WTC11 (cell line): ENCODE measurements at regions of chr14 and their contacts with region 1.

Region 1: DNA sequence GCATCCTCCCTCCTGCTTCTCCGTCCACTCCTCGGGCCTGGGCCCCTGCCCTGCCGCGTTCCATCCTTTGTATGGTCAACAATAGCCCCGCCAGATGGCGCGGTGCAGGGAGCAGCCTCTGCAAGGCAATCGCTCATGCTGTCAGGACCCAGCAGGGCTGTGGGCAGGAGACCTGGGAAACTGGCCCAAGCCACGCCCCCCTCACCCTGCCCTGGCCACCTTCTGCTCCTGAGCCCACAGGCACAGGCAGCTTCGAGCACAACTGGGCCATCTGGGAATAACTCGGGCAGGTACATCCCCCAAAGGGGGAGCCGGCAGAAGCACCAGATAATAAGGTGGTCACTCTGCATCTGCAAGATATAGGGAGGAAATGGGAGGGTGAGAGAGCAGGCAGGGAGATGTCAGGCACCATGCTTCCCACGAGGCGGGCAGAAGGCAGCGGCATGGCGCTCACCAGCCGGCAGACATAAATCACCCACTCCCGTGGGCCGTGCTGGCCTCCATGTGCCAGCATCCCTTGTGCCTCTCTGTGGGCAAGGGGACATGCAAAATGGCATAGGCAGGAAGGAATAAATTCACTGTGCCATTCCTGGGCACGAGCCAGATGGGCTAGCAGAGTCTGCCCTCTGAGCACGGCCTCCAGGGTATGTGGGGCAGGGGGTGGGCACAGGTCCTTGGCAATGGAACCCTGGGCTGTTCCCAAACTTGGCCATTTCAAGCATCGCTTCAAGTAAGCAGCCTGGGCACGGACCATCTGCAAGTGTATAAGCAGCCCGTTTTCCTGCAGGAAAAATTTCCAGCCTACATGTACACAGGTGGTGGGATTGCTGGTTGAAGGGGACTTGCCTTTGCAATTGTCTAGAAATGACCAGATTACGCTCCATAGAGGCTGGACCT is 40.5 kb downstream of the CCDC85C start:
- DNase-seq: peak; percentile 92
- ATAC-seq: peak; percentile 94
- H3K4me3 Mint-ChIP-seq: no peak overlapping the region
- H3K27ac Mint-ChIP-seq: peak overlapping the region; percentile 44; the same call in 1 of the 2 replicates
- H3K4me1 Mint-ChIP-seq: peaks cover 56% of the 10 kb centered on the region
- H3K27me3 Mint-ChIP-seq: no peaks in the 10 kb centered on the region
- CTCF ChIP-seq: no peak

Region 2: GRCh38 chr14:99415496-99416281 is 147.8 kb before region 1 on chr14:
- CTCF ChIA-PET with region 1: no interaction called
- POLR2A ChIA-PET with region 1: no interaction called
- DNase-seq: peak; percentile 52
- ATAC-seq: peak; percentile 35
- H3K4me3 Mint-ChIP-seq: peak overlapping the region; percentile 8
- H3K27ac Mint-ChIP-seq: peak overlapping the region; percentile 16
- H3K4me1 Mint-ChIP-seq: peaks cover 61% of the 10 kb centered on the region
- H3K27me3 Mint-ChIP-seq: no peaks in the 10 kb centered on the region
- CTCF ChIP-seq: peak; percentile 70

Region 3: GRCh38 chr14:99628832-99629618 is 65.5 kb after region 1 on chr14:
- CTCF ChIA-PET with region 1: interaction called, 14 read pairs
- POLR2A ChIA-PET with region 1: no interaction called
- DNase-seq: peak; percentile 84
- ATAC-seq: peak; percentile 91
- H3K4me3 Mint-ChIP-seq: no peak overlapping the region
- H3K27ac Mint-ChIP-seq: no peak overlapping the region
- H3K4me1 Mint-ChIP-seq: peaks cover 15% of the 10 kb centered on the region
- H3K27me3 Mint-ChIP-seq: no peaks in the 10 kb centered on the region
- CTCF ChIP-seq: peak; percentile 98